Cardiac septum (tissue), 1 donor: ENCODE measurements at regions of chr19 and their contacts with region 1.

Region 1: DNA sequence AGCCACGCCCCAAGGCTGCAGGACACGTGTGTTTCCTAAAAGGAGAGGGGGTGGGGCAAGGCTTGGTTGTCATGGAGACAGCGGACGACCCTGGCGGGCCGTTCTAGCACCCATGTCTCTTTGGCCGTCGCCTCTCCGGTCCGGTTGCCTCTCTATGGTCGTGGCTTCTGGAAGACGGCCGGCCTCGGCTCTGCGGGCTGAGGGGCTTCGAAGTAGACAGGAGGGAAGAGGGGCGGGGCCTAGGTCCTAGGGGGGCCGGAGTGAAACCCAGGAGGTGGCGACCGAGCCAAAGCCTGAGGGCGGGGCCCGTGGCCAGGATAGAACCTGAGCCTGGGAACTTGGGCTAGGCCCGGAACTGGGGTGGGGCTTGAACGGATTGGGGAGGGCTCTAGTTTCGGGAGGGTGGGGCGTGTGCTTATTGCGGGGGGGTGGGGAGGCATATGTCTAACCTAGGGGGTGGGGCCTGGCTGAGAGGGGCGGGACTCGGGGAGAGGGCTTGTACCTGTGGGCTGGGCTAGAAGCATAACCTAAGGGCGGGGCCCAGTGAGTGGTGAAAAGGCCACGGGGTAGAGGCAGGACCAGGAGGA is 750 bp upstream of the SLC27A1 start:
- DNase-seq: peak; percentile 96

Region 2: DNA sequence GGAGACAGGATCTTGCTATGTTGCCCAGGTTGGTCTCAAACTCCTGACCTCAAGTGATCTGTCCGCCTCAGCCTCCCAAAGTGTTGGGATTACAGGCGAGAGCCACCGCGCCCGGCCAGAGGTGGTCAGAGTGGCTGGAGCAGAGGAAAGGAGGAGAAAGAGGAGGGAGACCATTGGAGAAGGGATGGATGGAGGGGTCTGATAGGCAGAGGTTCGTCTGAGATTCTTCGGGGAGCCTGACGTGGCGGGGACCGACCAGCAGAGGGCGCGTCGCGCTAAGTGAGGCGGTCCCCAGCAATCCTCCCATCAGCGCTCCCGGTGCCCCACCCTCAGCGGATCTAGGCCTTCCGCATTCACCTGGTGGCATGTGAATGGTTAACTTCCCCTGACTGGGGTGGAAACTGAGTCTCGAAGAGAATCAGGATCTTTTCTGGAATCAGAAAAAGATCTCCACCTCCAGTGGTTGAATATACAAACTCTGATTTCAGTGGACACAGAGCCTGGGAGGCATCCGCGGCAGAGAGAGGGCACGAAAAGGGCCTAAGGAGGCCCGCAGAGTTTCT is 123.4 kb before region 1 on chr19:
- intact Hi-C with region 1: loop called (anchors 5 kb)
- DNase-seq: peak; percentile 89